Naive thymus-derived CD8-positive, alpha-beta T cell (primary cell): ENCODE measurements at regions of chr14 and their contacts with region 1.

Region 1: GRCh38 chr14:22570132-22570949 is 18.7 kb downstream of the DAD1 start:
- DNase-seq: peak; percentile 54 to 97 (median 92)
- ATAC-seq: peak; percentile 82 to 91
- H3K4me3 Mint-ChIP-seq: peak overlapping the region; percentile 61 to 89 (median 82)
- H3K27ac Mint-ChIP-seq: peak overlapping the region; percentile 95 to 100 (median 99)
- H3K4me1 Mint-ChIP-seq: peaks cover 28 to 60% (median 52%) of the 10 kb centered on the region in 4 donors
- H3K27me3 Mint-ChIP-seq: no peaks in the 10 kb centered on the region

Region 2: GRCh38 chr14:21917699-21918436 is 652.5 kb before region 1 on chr14:
- POLR2A ChIA-PET with region 1: interaction called, 17 read pairs
- DNase-seq: peak in 9 of 10 donors; percentile 37 to 80 (median 64)
- ATAC-seq: peak; percentile 65 to 70
- H3K4me3 Mint-ChIP-seq: peak overlapping the region; percentile 64 to 89 (median 81)
- H3K27ac Mint-ChIP-seq: peak overlapping the region; percentile 3 to 91 (median 82)
- H3K4me1 Mint-ChIP-seq: peaks cover 12 to 73% (median 50%) of the 10 kb centered on the region in 4 donors
- H3K27me3 Mint-ChIP-seq: no peaks in the 10 kb centered on the region

Region 3: GRCh38 chr14:22519877-22520685 is 50.3 kb before region 1 on chr14:
- POLR2A ChIA-PET with region 1: interaction called, 10 read pairs
- DNase-seq: no peak
- ATAC-seq: peak; percentile 19
- H3K4me3 Mint-ChIP-seq: peak overlapping the region; percentile 80 to 94 (median 90)
- H3K27ac Mint-ChIP-seq: peak overlapping the region; percentile 94 to 99 (median 98)
- H3K4me1 Mint-ChIP-seq: peaks cover 44 to 100% (median 89%) of the 10 kb centered on the region in 4 donors
- H3K27me3 Mint-ChIP-seq: no peaks in the 10 kb centered on the region

Region 4: GRCh38 chr14:22589096-22589839 is 18.9 kb after region 1 on chr14 and contains the start of gene DAD1:
- POLR2A ChIA-PET with region 1: interaction called, 60 read pairs
- DNase-seq: peak; percentile 98 to 100 (median 100)
- ATAC-seq: peak; percentile 88 to 93
- H3K4me3 Mint-ChIP-seq: peak within 1 kb of the TSS; percentile 90 to 99 (median 98)
- H3K27ac Mint-ChIP-seq: peak within 1 kb of the TSS; percentile 95 to 100 (median 99)
- H3K4me1 Mint-ChIP-seq: peaks cover 34 to 60% (median 55%) of the 10 kb centered on the region in 4 donors
- H3K27me3 Mint-ChIP-seq: peaks cover 0 to 5% (median 0%) of the 10 kb centered on the region in 5 donors
- polyA plus RNA-seq, gene DAD1: 610 to 660 (median 642) TPM

Region 5: GRCh38 chr14:22653012-22653621 is 82.8 kb after region 1 on chr14:
- POLR2A ChIA-PET with region 1: interaction called, 15 read pairs
- DNase-seq: peak; percentile 15 to 72 (median 40)
- ATAC-seq: peak; percentile 82 to 95
- H3K4me3 Mint-ChIP-seq: no peak overlapping the region
- H3K27ac Mint-ChIP-seq: no peak overlapping the region
- H3K4me1 Mint-ChIP-seq: no peaks in the 10 kb centered on the region
- H3K27me3 Mint-ChIP-seq: peaks cover 0 to 5% (median 0%) of the 10 kb centered on the region in 5 donors

Region 6: GRCh38 chr14:22852940-22853767 is 282.8 kb after region 1 on chr14:
- POLR2A ChIA-PET with region 1: interaction called, 15 read pairs
- DNase-seq: peak; percentile 80 to 97 (median 88)
- ATAC-seq: peak; percentile 93 to 94
- H3K4me3 Mint-ChIP-seq: peak overlapping the region; percentile 76 to 91 (median 85)
- H3K27ac Mint-ChIP-seq: peak overlapping the region in 9 of 10 donors; percentile 48 to 86 (median 77)
- H3K4me1 Mint-ChIP-seq: peaks cover 8 to 26% (median 14%) of the 10 kb centered on the region in 4 donors
- H3K27me3 Mint-ChIP-seq: peaks cover 7 to 23% (median 10%) of the 10 kb centered on the region in 5 donors